ENCODE measurements at regions of chr4 and their contacts with region 1.

Region 1: GRCh38 chr4:36549252-36549651 is 267.8 kb downstream of the DTHD1 start:
- DNase-seq: no peak
- ATAC-seq: no peak

Region 2: GRCh38 chr4:36159208-36159607 is 390.0 kb before region 1 on chr4:
- intact Hi-C with region 1: loop called (anchors 10 kb)
- DNase-seq: no peak
- ATAC-seq: no peak

Region 3: DNA sequence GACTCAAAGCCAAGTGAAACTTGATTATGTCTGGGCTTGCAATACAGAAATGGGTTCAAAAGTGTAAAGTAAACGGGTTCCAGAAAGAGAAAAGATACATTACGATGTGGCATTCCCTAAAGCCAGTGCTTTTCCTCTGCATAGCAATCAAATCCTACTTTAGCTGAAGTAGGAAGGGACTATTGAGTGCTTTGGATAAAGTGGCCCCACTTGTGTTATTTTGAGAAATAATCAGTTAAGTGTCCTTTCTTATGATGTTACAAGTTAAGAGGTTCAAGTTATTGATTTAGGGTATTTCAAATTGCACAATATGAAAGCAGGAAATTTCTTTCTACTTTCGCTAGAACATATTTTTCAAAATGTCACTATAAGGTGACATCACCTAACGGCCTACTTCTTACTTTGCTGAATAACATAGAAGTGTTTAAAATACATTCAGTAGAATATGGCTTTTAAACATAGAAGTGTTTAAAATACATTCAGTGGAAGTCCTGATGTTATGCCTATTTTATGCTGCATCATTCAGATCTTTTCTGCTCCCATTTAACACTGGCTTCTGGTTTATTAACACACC is 32.6 kb before region 1 on chr4:
- intact Hi-C with region 1: no loop called
- DNase-seq: no peak
- ATAC-seq: no peak